Thyroid gland (tissue), 4 donors: ENCODE measurements at regions of chr4 and their contacts with region 1.

Region 1: DNA sequence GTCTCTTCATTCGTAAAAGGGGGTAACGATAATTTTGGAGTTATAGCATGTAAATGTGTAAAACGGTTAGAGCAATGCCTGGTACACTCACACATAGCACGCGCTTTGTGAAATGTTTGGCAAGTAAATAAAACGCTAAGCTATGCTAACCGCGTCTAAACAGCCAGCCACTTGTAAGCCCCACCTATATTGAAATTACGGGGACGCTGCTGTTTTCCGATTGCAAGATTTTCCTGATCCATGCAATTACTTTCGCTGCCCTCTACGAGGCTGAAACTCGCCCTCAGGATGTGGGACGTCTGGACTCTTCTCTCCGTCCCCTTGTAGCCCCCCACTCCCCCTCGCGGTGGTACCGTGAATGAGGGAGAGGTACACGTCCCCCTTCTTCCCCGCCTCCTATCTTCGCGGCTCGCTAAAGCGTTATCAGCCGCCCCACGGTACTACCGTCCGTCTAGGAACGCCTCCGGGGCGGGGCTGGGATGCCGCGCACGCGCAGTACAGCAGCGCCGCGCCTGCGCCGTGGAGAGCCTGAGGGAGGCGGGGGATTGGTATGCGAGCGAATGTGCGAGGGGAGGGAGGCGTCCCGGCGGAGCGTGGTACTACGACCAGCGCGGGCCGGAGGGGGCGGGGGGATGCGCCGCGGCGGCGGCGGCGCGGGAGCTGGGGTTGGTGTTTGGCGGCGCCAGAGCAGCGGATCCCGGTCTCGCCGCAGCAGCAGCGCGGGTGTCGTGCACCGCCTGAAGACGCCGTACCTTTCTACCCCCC is at the start of gene STIM2:
- DNase-seq: peak; percentile 95 to 96
- H3K4me3 ChIP-seq: peak within 1 kb of the TSS; percentile 43 to 93 (median 71)
- H3K27ac ChIP-seq: peak within 1 kb of the TSS; percentile 85 to 97 (median 92)
- H3K4me1 ChIP-seq: peaks cover 30% of the 10 kb centered on the region in 2 donors
- H3K27me3 ChIP-seq: no peaks in the 10 kb centered on the region
- CTCF ChIP-seq: peak in 5 of 6 experiments; percentile 24 to 52 (median 28)
- POLR2A ChIP-seq: peak in 1 of 2 donors; percentile 93
- total RNA-seq, gene STIM2: 16.4 to 39.1 (median 18.5) TPM

Region 2: DNA sequence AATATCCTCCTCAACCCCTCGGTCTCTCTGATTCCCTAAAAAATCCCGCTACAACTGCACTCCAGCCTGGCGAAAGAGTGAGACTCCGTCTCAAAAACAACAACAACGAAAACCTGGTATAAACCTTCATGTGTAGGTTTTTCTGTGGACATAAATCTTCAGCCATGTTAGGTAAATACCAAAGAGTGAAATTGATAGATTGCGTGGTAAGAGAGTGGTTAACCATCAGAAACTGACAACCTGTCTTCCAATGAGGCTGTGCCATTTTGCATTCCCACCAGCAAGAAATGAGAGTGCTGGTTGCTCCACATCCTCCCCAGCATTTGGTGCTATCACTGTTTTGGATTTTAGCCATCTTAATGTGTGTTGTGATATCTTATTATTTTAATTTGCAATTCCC is 265.6 kb before region 1 on chr4:
- intact Hi-C with region 1: no loop called
- DNase-seq: no peak
- H3K4me3 ChIP-seq: no peak overlapping the region
- H3K27ac ChIP-seq: no peak overlapping the region
- H3K4me1 ChIP-seq: no peaks in the 10 kb centered on the region
- H3K27me3 ChIP-seq: no peaks in the 10 kb centered on the region
- CTCF ChIP-seq: no peak
- POLR2A ChIP-seq: no peak

Region 3: GRCh38 chr4:26885912-26886274 is 25.6 kb after region 1 on chr4:
- intact Hi-C with region 1: no loop called
- DNase-seq: no peak
- H3K4me3 ChIP-seq: no peak overlapping the region
- H3K27ac ChIP-seq: no peak overlapping the region
- H3K4me1 ChIP-seq: no peaks in the 10 kb centered on the region
- H3K27me3 ChIP-seq: no peaks in the 10 kb centered on the region
- CTCF ChIP-seq: no peak
- POLR2A ChIP-seq: no peak

Region 4: DNA sequence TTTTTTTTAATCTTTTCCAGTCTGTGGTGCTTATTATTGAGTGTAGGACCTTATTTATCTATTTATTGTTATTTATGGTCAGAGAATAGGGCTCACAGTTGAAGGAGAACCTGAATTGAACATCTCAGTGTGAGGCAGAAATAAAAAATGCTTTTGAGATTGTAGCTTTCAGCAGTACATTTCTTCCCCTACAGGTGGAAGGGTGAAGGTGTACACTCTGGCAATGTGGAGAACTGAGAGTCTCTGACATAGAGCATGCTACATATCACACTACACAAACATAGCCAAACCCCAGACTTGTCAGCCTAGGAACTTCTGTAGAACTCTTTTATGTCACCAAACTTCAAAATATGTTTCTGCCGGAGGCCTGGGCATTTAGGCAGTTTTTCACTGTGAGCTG is 140.5 kb after region 1 on chr4:
- intact Hi-C with region 1: loop called (anchors 10 kb)
- DNase-seq: no peak
- H3K4me3 ChIP-seq: no peak overlapping the region
- H3K27ac ChIP-seq: no peak overlapping the region
- H3K4me1 ChIP-seq: peaks cover 9 to 10% of the 10 kb centered on the region in 2 donors
- H3K27me3 ChIP-seq: no peaks in the 10 kb centered on the region
- CTCF ChIP-seq: peak in 3 of 6 experiments; percentile 21 to 38 (median 38)
- POLR2A ChIP-seq: no peak

Region 5: DNA sequence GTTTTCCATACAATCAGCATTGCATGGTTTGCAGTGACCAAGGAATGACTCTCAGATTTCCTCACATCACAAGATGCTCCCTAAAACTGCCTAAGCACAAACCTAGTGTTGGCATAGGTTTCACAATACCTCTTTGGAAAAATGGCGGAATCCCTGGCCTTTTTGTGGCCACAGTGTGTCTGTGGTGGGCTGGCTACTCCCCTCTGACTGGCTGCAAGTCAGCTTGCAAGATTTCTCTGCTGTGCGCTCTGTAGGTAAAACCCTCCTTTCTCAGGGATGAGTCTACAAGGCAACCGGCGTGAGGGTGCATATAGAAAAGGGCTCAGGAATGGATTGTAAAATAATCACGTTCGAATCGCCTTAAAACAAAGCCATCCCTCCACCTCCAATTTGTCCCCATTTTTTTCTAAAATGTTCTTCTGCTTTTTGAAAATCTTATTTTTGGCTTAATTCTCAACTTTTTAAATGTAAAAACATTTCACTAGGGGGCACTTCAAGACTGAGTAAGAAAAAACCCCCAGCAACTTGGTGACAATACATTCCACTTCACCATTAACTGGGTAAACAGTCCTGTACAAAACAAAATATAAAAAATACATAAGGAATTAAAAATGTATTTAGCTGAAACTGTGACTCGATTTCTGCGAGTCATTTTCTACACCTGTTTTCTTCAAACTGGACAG is 235.9 kb after region 1 on chr4:
- intact Hi-C with region 1: no loop called
- DNase-seq: no peak
- H3K4me3 ChIP-seq: no peak overlapping the region
- H3K27ac ChIP-seq: no peak overlapping the region
- H3K4me1 ChIP-seq: no peaks in the 10 kb centered on the region
- H3K27me3 ChIP-seq: no peaks in the 10 kb centered on the region
- CTCF ChIP-seq: no peak
- POLR2A ChIP-seq: no peak